Caco-2 (cell line): ENCODE measurements at regions of chr5 and their contacts with region 1.

Region 1: GRCh38 chr5:9782841-9783560 is 152.8 kb upstream of the TAS2R1 start:
- DNase-seq: peak; percentile 70 to 73
- H3K4me3 ChIP-seq: no peak overlapping the region
- H3K4me3 Mint-ChIP-seq: peak overlapping the region; percentile 42
- H3K27ac Mint-ChIP-seq: peak overlapping the region; percentile 67
- H3K4me1 ChIP-seq: peaks cover 26% of the 10 kb centered on the region
- H3K4me1 Mint-ChIP-seq: peaks cover 26% of the 10 kb centered on the region
- H3K27me3 ChIP-seq: no peaks in the 10 kb centered on the region
- H3K27me3 Mint-ChIP-seq: no peaks in the 10 kb centered on the region
- CTCF ChIP-seq: no peak

Region 2: GRCh38 chr5:9466677-9467076 is 316.3 kb before region 1 on chr5:
- CTCF ChIA-PET with region 1: no interaction called
- POLR2A ChIA-PET with region 1: no interaction called
- intact Hi-C with region 1: no loop called
- DNase-seq: no peak
- H3K4me3 ChIP-seq: no peak overlapping the region
- H3K4me3 Mint-ChIP-seq: no peak overlapping the region
- H3K27ac Mint-ChIP-seq: no peak overlapping the region
- H3K4me1 ChIP-seq: no peaks in the 10 kb centered on the region
- H3K4me1 Mint-ChIP-seq: no peaks in the 10 kb centered on the region
- H3K27me3 ChIP-seq: no peaks in the 10 kb centered on the region
- H3K27me3 Mint-ChIP-seq: no peaks in the 10 kb centered on the region
- CTCF ChIP-seq: no peak

Region 3: GRCh38 chr5:9829621-9830567 is 46.9 kb after region 1 on chr5:
- CTCF ChIA-PET with region 1: interaction called, 4 read pairs
- POLR2A ChIA-PET with region 1: interaction called, 4 read pairs
- intact Hi-C with region 1: loop called (anchors 2 kb)
- DNase-seq: peak in 1 of 2 experiments; percentile 30
- H3K4me3 ChIP-seq: no peak overlapping the region
- H3K4me3 Mint-ChIP-seq: peak overlapping the region; percentile 1
- H3K27ac Mint-ChIP-seq: peak overlapping the region; percentile 14
- H3K4me1 ChIP-seq: peaks cover 53% of the 10 kb centered on the region
- H3K4me1 Mint-ChIP-seq: peaks cover 40% of the 10 kb centered on the region
- H3K27me3 ChIP-seq: no peaks in the 10 kb centered on the region
- H3K27me3 Mint-ChIP-seq: no peaks in the 10 kb centered on the region
- CTCF ChIP-seq: no peak

Region 4: DNA sequence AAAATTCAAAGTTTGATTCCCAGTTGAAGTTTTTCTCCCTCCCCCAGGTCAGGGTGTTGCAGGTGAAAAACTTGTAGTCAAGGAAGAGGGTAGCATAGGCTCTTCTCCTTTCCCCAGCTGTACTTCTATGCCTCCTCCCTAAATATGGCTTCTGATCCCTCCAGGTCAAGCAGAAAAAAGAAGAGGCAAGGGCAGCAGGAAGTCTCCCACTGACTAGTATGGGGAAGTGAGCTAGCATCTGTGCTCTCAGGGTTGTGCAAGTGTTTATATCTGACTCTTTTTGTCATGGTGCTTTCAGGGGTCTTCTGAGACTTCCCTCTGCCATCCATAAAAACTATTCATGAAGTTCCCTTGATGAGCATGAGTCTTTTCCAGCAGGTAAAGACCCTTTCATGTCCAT is 390.7 kb after region 1 on chr5:
- CTCF ChIA-PET with region 1: no interaction called
- POLR2A ChIA-PET with region 1: no interaction called
- intact Hi-C with region 1: no loop called
- DNase-seq: no peak
- H3K4me3 ChIP-seq: no peak overlapping the region
- H3K4me3 Mint-ChIP-seq: no peak overlapping the region
- H3K27ac Mint-ChIP-seq: no peak overlapping the region
- H3K4me1 ChIP-seq: no peaks in the 10 kb centered on the region
- H3K4me1 Mint-ChIP-seq: no peaks in the 10 kb centered on the region
- H3K27me3 ChIP-seq: no peaks in the 10 kb centered on the region
- H3K27me3 Mint-ChIP-seq: no peaks in the 10 kb centered on the region
- CTCF ChIP-seq: no peak